ENCODE measurements at regions of chr6 and their contacts with region 1.

Region 1: DNA sequence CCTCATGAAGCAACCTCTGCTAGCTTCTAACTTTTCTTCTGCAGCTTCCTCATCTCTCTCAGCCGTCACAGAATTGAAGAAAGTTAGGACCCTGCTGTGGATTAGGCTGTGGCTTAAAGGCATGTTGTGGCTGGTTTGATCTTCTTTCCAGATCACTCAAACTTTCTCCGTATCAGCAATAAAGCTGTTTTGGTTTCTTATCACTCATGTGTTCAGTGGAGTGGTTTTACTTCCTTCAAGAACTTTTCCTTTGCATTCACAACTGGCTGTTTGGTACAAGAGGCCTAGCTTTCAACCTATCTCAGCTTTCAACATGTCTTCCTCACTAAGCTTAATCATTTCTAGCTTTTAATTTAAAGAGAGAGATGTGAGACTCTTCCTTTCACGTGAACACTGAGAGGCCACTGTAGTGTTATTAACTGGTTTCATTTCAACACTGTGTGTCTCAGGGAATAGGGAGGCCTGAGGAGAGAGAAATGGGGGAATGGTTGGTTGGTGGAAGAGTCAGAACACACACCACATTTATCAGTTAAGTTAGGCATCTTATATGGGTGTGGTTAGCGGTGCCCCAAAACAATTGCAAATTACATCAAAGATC is 17.2 kb downstream of the ZSCAN23 start:
- DNase-seq: no peak
- H3K4me3 ChIP-seq: no peak overlapping the region
- H3K27ac ChIP-seq: no peak overlapping the region
- H3K4me1 ChIP-seq: no peaks in the 10 kb centered on the region; the same call in 1 of the 2 replicates
- H3K27me3 ChIP-seq: no peaks in the 10 kb centered on the region
- CTCF ChIP-seq: no peak

Region 2: DNA sequence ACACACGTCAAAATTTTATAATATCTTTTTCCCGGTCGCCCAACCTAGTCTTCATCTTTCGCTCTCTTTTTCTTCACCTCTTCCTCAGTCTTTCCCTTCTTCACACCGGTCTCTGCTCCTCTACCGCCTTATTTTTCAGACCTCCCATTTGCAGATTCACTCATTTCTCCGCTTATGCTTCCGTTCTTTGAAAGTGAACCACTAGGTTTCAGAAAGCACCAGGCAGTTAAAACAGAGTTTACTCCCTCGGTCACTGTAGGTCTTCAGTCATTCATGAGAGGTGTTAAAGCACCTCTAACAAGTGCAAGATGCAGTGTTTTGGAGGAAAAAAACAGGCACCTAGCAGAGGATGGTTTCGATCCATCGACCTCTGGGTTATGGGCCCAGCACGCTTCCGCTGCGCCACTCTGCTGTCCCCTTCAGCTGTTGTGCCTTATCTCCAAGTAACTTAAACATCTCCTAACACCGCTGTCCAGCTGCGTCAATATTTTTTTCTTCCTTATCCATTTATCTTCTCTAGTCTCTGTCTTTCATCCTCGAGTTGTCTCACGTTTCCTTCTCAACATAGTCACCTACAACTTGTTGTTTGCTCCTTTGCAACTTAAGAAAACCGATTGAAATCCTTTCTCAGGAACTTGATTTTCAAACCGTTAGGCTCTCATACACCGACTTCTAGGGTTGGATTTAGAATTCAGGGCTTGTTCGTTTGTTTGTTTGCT is 833.4 kb before region 1 on chr6:
- CTCF ChIA-PET with region 1: no interaction called
- POLR2A ChIA-PET with region 1: no interaction called
- intact Hi-C with region 1: no loop called
- DNase-seq: peak; percentile 56 to 73
- H3K4me3 ChIP-seq: peak overlapping the region; percentile 64
- H3K27ac ChIP-seq: no peak overlapping the region
- H3K4me1 ChIP-seq: peaks cover 11% of the 10 kb centered on the region; the same call in 1 of the 2 replicates
- H3K27me3 ChIP-seq: no peaks in the 10 kb centered on the region
- CTCF ChIP-seq: no peak

Region 3: GRCh38 chr6:28090917-28091586 is 335.0 kb before region 1 on chr6:
- CTCF ChIA-PET with region 1: no interaction called
- POLR2A ChIA-PET with region 1: no interaction called
- intact Hi-C with region 1: no loop called
- DNase-seq: no peak
- H3K4me3 ChIP-seq: no peak overlapping the region
- H3K27ac ChIP-seq: no peak overlapping the region
- H3K4me1 ChIP-seq: no peaks in the 10 kb centered on the region
- H3K27me3 ChIP-seq: no peaks in the 10 kb centered on the region
- CTCF ChIP-seq: no peak

Region 4: DNA sequence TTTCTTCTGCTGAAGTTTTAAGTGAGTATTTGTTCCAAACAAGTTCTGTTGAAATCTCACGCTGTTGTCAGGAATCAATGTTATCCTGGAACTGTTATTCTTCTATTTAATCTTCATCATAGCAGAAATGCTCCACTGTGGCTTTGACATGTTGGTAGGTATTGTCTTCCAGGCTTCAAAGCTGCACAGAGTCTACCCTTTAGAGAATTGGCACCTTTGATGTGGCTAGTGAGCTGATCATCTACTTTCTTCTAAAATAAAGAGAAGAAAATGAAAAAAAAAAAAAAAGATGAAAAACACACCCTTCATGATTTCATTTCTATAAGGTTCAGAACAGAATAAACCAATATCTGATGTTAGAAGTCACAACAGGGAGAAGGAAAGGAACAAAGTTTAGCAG is 23.0 kb after region 1 on chr6:
- CTCF ChIA-PET with region 1: interaction called, 10 read pairs
- POLR2A ChIA-PET with region 1: no interaction called
- intact Hi-C with region 1: no loop called
- DNase-seq: no peak
- H3K4me3 ChIP-seq: no peak overlapping the region
- H3K27ac ChIP-seq: no peak overlapping the region
- H3K4me1 ChIP-seq: no peaks in the 10 kb centered on the region
- H3K27me3 ChIP-seq: 0 out of 2 replicates have a peak, but pooled peaks cover 5% of the 10 kb centered on the region
- CTCF ChIP-seq: no peak